CD8-positive, alpha-beta T cell (primary cell): ENCODE measurements at regions of chr19 and their contacts with region 1.

Region 1: GRCh38 chr19:44212250-44212865 is at the start of gene ZNF227:
- DNase-seq: peak; percentile 52 to 88 (median 81)
- ATAC-seq: peak; percentile 96
- H3K4me3 ChIP-seq: peak within 1 kb of the TSS; percentile 79 to 94
- H3K4me3 Mint-ChIP-seq: peak within 1 kb of the TSS; percentile 95
- H3K27ac ChIP-seq: peak within 1 kb of the TSS; percentile 75 to 81
- H3K27ac Mint-ChIP-seq: peak within 1 kb of the TSS; percentile 95
- H3K4me1 ChIP-seq: peaks cover 18% of the 10 kb centered on the region
- H3K4me1 Mint-ChIP-seq: peaks cover 32% of the 10 kb centered on the region
- H3K27me3 ChIP-seq: no peaks in the 10 kb centered on the region
- H3K27me3 Mint-ChIP-seq: no peaks in the 10 kb centered on the region
- CTCF ChIP-seq: no peak
- total RNA-seq, gene ZNF227: 22.6 to 23.0 TPM

Region 2: DNA sequence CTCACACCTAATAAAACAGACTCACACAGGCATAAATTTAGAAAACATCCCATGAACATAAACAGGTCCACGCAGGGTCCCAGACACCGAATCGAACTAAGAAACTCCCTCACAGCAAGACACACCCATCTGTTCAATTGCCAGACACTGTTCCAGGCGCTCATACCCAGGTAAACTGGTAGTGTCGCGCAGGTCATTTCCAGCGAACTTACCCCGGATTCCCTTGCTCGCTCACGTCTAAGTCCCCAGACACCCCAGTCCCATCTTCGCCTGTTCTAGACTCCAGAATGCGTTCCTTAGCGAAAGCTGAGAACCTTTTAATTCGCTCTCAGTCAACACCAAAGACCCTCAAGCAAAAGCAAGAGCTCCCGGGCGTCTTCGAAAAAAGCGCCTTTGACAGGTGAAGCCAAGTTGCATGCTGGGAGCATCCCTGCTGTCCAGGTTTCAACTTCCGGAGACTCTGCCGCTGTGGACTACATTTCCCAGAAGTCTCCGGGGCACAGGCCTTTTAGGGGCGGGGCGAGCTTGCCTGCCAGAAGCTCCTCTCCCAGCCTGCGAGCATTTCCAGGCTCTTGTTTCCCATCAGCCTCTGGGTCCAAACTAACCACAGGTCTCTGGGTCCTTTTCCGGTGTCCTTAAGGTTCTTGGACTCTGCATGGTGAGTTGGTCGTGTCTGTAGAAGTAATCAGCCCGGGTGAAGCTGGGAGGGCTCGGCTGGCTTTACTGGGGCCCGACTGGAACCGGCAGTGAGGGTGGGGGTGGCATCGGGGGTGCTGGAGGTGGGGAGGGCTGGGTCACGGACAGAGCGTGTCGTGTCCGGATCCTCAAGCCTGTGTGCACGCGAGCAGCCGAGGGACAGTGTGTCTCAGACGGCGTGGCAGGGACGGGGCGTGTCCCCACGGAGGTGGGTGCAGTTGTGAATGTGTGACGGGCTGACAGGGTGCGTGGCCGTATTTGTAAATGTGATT is 385.3 kb before region 1 on chr19 and contains the start of gene ZNF283:
- CTCF ChIA-PET with region 1: no interaction called
- POLR2A ChIA-PET with region 1: no interaction called
- intact Hi-C with region 1: loop called in 1 of 2 experiments (anchors 1 kb)
- DNase-seq: peak; percentile 64 to 90 (median 81)
- ATAC-seq: peak; percentile 92
- H3K4me3 ChIP-seq: peak within 1 kb of the TSS; percentile 52 to 69
- H3K4me3 Mint-ChIP-seq: peak within 1 kb of the TSS; percentile 88
- H3K27ac ChIP-seq: no peak within 1 kb of the TSS
- H3K27ac Mint-ChIP-seq: peak within 1 kb of the TSS; percentile 39
- H3K4me1 ChIP-seq: peaks cover 12% of the 10 kb centered on the region
- H3K4me1 Mint-ChIP-seq: peaks cover 22% of the 10 kb centered on the region
- H3K27me3 ChIP-seq: no peaks in the 10 kb centered on the region
- H3K27me3 Mint-ChIP-seq: peaks cover 8% of the 10 kb centered on the region
- CTCF ChIP-seq: no peak
- total RNA-seq, gene ZNF283: 1.3 to 1.4 TPM

Region 3: GRCh38 chr19:44051654-44052402 is 160.5 kb before region 1 on chr19 and contains the start of gene ZNF223:
- CTCF ChIA-PET with region 1: no interaction called
- POLR2A ChIA-PET with region 1: no interaction called
- intact Hi-C with region 1: loop called in 1 of 2 experiments (anchors 1 kb)
- DNase-seq: peak; percentile 9 to 85 (median 68)
- ATAC-seq: peak; percentile 84
- H3K4me3 ChIP-seq: peak within 1 kb of the TSS; percentile 71 to 77
- H3K4me3 Mint-ChIP-seq: peak within 1 kb of the TSS; percentile 93
- H3K27ac ChIP-seq: peak within 1 kb of the TSS in 1 of 2 experiments; percentile 40
- H3K27ac Mint-ChIP-seq: peak within 1 kb of the TSS; percentile 85
- H3K4me1 ChIP-seq: peaks cover 11% of the 10 kb centered on the region
- H3K4me1 Mint-ChIP-seq: peaks cover 38% of the 10 kb centered on the region
- H3K27me3 ChIP-seq: no peaks in the 10 kb centered on the region
- H3K27me3 Mint-ChIP-seq: no peaks in the 10 kb centered on the region
- CTCF ChIP-seq: no peak
- total RNA-seq, gene ZNF223: 0.72 to 1.3 TPM

Region 4: GRCh38 chr19:44113138-44113783 is 99.1 kb before region 1 on chr19 and contains the start of gene ZNF225:
- CTCF ChIA-PET with region 1: no interaction called
- POLR2A ChIA-PET with region 1: interaction called, 3 read pairs
- intact Hi-C with region 1: loop called (anchors 1 kb)
- DNase-seq: peak; percentile 64 to 95 (median 83)
- ATAC-seq: peak; percentile 97
- H3K4me3 ChIP-seq: peak within 1 kb of the TSS; percentile 80 to 92
- H3K4me3 Mint-ChIP-seq: peak within 1 kb of the TSS; percentile 99
- H3K27ac ChIP-seq: peak within 1 kb of the TSS; percentile 40 to 64
- H3K27ac Mint-ChIP-seq: peak within 1 kb of the TSS; percentile 93
- H3K4me1 ChIP-seq: peaks cover 14% of the 10 kb centered on the region
- H3K4me1 Mint-ChIP-seq: peaks cover 34% of the 10 kb centered on the region
- H3K27me3 ChIP-seq: no peaks in the 10 kb centered on the region
- H3K27me3 Mint-ChIP-seq: no peaks in the 10 kb centered on the region
- CTCF ChIP-seq: no peak
- total RNA-seq, gene ZNF225: 1.3 to 1.6 TPM

Region 5: DNA sequence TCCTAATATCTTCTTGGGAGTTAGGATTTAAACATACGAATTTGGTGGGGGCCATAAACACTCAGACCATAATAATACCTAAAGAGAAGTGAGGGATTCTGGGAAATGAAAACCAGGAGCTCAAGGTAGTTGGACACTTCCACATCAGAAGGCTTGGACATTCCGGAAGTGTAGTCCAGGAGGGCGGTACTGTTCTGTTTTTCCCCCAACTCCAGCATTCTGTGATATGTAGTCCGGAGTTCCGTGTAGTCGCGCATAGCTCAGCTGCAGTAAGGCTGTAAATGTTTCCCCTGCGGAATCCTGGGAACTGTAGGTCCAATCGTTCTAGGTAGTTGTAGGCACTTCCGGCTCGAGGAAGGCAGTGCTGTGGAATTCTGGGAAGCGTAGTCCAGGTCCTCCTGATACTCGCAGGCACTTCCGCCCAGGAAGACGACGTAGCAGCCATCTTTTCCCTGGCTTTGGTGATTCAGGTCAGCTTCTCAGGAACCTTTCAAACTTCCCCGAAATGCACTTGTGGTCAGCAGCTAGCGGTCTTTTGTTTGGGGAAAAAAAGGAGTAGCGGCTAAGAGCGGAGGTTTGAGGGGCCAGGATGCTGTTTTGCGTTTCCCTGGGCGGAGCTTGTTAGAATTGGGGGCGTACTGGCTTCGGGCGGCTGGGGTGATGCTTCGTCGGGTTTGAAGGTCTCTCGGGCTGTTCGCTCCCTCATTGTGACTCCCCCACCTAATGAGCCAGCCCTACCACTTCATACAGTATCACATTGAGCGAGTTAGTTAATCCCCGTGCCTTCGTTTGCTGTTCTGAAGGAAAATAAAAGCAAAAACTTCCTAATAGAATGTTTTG is 47.5 kb before region 1 on chr19 and contains the start of gene ZNF226:
- CTCF ChIA-PET with region 1: no interaction called
- POLR2A ChIA-PET with region 1: interaction called, 13 read pairs
- intact Hi-C with region 1: loop called (anchors 1 kb)
- DNase-seq: peak; percentile 61 to 95 (median 82)
- ATAC-seq: peak; percentile 92
- H3K4me3 ChIP-seq: peak within 1 kb of the TSS; percentile 72 to 79
- H3K4me3 Mint-ChIP-seq: peak within 1 kb of the TSS; percentile 98
- H3K27ac ChIP-seq: peak within 1 kb of the TSS; percentile 69 to 90
- H3K27ac Mint-ChIP-seq: peak within 1 kb of the TSS; percentile 99
- H3K4me1 ChIP-seq: peaks cover 10% of the 10 kb centered on the region
- H3K4me1 Mint-ChIP-seq: peaks cover 31% of the 10 kb centered on the region
- H3K27me3 ChIP-seq: no peaks in the 10 kb centered on the region
- H3K27me3 Mint-ChIP-seq: no peaks in the 10 kb centered on the region
- CTCF ChIP-seq: no peak
- total RNA-seq, gene ZNF226: 9.1 to 10.8 TPM

Region 6: GRCh38 chr19:44192127-44192526 is 20.2 kb before region 1 on chr19:
- CTCF ChIA-PET with region 1: no interaction called
- POLR2A ChIA-PET with region 1: no interaction called
- intact Hi-C with region 1: no loop called
- DNase-seq: no peak
- ATAC-seq: no peak
- H3K4me3 ChIP-seq: no peak overlapping the region
- H3K4me3 Mint-ChIP-seq: no peak overlapping the region
- H3K27ac ChIP-seq: no peak overlapping the region
- H3K27ac Mint-ChIP-seq: no peak overlapping the region
- H3K4me1 ChIP-seq: no peaks in the 10 kb centered on the region
- H3K4me1 Mint-ChIP-seq: no peaks in the 10 kb centered on the region
- H3K27me3 ChIP-seq: peaks cover 0 to 2% of the 10 kb centered on the region in 2 experiments
- H3K27me3 Mint-ChIP-seq: no peaks in the 10 kb centered on the region
- CTCF ChIP-seq: no peak

Region 7: DNA sequence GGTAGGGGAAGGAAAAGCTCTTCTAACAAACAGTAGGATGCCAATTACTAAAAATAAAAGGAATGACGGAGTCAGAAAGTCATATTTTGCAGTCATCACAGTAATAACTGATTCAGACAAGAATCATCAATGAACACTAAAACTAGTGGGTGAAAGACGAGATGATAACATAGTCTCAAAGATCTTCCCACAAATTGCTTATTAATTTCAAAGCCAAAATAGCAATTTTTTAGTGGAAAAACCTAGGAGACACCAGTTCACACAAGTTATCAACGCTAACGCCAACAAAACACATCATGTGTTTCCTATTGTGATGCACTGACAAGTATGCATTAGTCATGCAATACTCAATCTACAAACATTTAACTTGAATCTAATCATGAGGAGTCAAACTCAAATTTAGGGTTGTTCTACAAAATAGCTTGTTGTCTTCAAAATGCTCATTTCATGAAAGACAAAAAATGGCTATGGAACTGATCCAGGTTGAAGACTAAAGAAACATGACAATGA is 65.9 kb after region 1 on chr19:
- CTCF ChIA-PET with region 1: no interaction called
- POLR2A ChIA-PET with region 1: no interaction called
- intact Hi-C with region 1: no loop called
- DNase-seq: no peak
- ATAC-seq: no peak
- H3K4me3 ChIP-seq: no peak overlapping the region
- H3K4me3 Mint-ChIP-seq: no peak overlapping the region
- H3K27ac ChIP-seq: no peak overlapping the region
- H3K27ac Mint-ChIP-seq: no peak overlapping the region
- H3K4me1 ChIP-seq: no peaks in the 10 kb centered on the region
- H3K4me1 Mint-ChIP-seq: no peaks in the 10 kb centered on the region
- H3K27me3 ChIP-seq: no peaks in the 10 kb centered on the region
- H3K27me3 Mint-ChIP-seq: no peaks in the 10 kb centered on the region
- CTCF ChIP-seq: no peak

Region 8: DNA sequence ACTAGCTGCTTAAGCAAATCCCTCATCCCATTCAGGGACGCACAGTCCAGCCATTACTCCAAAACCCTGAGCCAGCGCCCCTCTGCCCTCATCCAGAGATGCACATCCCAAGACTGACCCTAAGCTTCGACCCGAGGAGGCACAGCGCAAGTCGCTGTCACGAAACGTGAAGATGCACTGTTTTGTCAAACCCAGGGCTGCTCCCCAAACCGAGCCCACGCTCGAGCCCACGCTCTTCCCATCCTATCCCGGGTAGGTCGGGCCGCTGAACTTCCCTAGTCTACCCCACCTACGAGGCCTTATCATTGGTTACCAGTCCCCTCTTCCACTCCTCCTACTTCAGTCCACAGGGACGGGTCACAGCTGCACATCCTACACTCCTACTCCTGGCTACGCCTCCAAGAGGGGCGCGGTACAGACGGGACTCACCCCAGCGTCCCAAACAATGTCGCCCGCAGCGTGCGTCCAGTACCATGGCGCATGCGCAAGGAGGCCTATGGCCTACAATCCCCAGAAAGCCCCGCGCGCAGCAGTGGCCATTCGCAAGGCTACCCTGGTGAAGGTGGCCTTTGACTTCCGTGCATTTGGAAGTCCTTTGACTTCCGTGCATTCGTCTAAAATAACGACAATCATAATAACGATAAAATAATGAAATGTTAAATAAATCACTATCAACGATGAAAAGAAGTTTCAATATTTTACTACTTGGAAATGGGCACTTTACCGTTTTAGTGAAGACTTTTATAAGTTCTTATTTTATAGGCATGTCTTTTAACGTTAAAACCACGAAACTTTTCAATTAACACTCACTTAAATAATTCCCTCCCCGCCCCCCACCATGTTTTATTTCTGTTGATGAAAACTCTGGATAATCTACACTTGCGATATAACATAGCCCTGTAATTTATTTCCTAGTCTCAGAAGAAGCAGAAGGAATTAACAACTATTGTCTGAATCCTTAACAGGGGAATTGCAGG is 189.1 kb after region 1 on chr19 and contains the start of gene ZNF285:
- CTCF ChIA-PET with region 1: no interaction called
- POLR2A ChIA-PET with region 1: no interaction called
- intact Hi-C with region 1: loop called in 1 of 2 experiments (anchors 1 kb)
- DNase-seq: peak; percentile 36 to 84 (median 76)
- ATAC-seq: peak; percentile 95
- H3K4me3 ChIP-seq: peak within 1 kb of the TSS; percentile 55 to 75
- H3K4me3 Mint-ChIP-seq: peak within 1 kb of the TSS; percentile 98
- H3K27ac ChIP-seq: no peak within 1 kb of the TSS
- H3K27ac Mint-ChIP-seq: peak within 1 kb of the TSS; percentile 88
- H3K4me1 ChIP-seq: peaks cover 6% of the 10 kb centered on the region
- H3K4me1 Mint-ChIP-seq: peaks cover 13% of the 10 kb centered on the region
- H3K27me3 ChIP-seq: no peaks in the 10 kb centered on the region
- H3K27me3 Mint-ChIP-seq: peaks cover 6% of the 10 kb centered on the region
- CTCF ChIP-seq: no peak
- total RNA-seq, gene ZNF285: 0.24 to 0.25 TPM